Activated CD8-positive, alpha-beta T cell treated with anti-CD3 and anti-CD28 coated beads for 36 hours (primary cell): ENCODE measurements at regions of chr15 and their contacts with region 1.

Region 1: DNA sequence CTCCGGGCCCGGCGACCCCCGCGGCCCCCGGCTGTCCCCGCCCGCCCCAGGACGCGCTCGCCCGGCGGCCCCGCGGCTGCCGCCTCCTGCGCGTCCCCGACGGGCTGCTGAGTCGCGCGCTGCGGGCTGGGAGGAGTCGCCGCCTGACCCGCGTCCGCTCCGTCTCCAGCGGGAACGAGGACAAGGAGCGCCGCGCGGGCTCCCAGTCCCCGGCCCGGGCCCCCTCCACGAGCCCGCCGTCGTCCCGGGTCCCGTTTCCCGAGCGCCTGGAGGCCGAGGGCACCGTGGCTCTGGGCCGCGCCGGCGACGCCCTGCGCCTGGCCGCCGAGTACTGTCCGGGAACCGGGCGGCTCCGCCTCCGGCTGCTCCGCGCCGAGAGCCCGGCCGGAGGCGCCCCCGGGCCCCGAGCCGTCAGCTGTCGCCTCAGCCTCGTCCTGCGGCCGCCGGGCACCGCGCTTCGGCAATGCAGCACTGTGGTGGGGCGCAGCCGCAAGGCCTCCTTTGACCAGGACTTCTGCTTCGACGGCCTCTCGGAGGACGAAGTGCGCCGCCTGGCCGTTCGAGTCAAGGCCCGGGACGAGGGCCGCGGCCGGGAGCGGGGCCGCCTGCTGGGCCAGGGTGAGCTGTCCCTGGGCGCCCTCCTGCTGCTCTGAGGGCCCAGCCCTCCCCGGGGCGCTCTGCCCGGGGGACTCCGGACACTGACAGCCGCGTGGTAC is 1.5 kb downstream of the C2CD4A start:
- DNase-seq: peak; percentile 16
- ATAC-seq: peak; percentile 58
- H3K4me3 Mint-ChIP-seq: peak overlapping the region; percentile 65
- H3K27ac Mint-ChIP-seq: peak overlapping the region; percentile 68
- H3K4me1 Mint-ChIP-seq: peaks cover 22% of the 10 kb centered on the region
- H3K27me3 Mint-ChIP-seq: peaks cover 27% of the 10 kb centered on the region
- CTCF ChIP-seq: no peak

Region 2: GRCh38 chr15:61871926-61872522 is 196.2 kb before region 1 on chr15:
- CTCF ChIA-PET with region 1: interaction called, 3 read pairs
- POLR2A ChIA-PET with region 1: no interaction called
- intact Hi-C with region 1: loop called (anchors 5 kb)
- DNase-seq: no peak
- ATAC-seq: no peak
- H3K4me3 Mint-ChIP-seq: no peak overlapping the region
- H3K27ac Mint-ChIP-seq: no peak overlapping the region
- H3K4me1 Mint-ChIP-seq: no peaks in the 10 kb centered on the region
- H3K27me3 Mint-ChIP-seq: no peaks in the 10 kb centered on the region
- CTCF ChIP-seq: peak; percentile 69